ENCODE measurements at regions of chr6 and their contacts with region 1.

Region 1: DNA sequence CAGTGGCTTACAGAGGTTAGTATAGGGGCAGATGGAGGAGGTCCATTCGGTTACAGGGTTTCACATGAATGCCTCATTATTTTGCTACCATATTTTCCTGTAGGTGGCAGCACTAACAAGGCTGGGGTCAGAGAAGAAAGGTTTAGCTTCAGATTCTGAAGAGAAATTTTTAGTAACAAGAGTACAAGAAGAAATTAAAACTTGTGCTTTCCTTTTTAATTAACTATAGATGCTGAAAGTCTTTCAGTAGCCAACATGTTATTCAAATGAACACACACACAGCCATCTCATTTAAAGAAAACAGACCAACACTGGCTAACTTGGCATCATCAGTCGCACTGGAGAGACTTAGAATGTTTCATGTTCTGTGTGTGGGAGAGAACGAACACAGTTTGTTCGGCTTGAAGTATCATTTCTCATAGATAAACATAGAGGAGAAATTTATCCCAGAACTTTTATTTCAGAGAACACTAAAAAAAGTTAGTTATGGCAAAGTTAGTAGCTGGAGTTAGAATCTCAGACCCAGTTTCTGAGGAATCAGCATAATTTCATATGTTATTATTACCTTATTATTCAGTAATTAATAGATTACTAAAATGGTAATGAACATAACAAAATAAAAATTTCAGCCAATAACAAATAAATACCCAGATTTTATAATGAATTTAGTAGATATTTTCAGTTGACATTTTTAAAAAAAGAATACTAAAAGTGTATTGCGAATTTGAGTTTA is 314.0 kb upstream of the RSPO3 start:
- DNase-seq: peak; percentile 77
- H3K4me3 ChIP-seq: no peak overlapping the region
- H3K27ac ChIP-seq: no peak overlapping the region
- H3K4me1 ChIP-seq: peaks cover 9% of the 10 kb centered on the region
- H3K27me3 ChIP-seq: no peaks in the 10 kb centered on the region
- CTCF ChIP-seq: peak; percentile 63 to 66
- POLR2A ChIP-seq: no peak

Region 2: GRCh38 chr6:125995972-125996580 is 808.4 kb before region 1 on chr6:
- CTCF ChIA-PET with region 1: interaction called, 8 read pairs
- POLR2A ChIA-PET with region 1: no interaction called
- dilution Hi-C with region 1: no loop called
- intact Hi-C with region 1: loop called (anchors 5 kb)
- DNase-seq: peak; percentile 74
- H3K4me3 ChIP-seq: no peak overlapping the region
- H3K27ac ChIP-seq: no peak overlapping the region
- H3K4me1 ChIP-seq: no peaks in the 10 kb centered on the region
- H3K27me3 ChIP-seq: no peaks in the 10 kb centered on the region
- CTCF ChIP-seq: peak; percentile 84 to 97
- POLR2A ChIP-seq: no peak

Region 3: DNA sequence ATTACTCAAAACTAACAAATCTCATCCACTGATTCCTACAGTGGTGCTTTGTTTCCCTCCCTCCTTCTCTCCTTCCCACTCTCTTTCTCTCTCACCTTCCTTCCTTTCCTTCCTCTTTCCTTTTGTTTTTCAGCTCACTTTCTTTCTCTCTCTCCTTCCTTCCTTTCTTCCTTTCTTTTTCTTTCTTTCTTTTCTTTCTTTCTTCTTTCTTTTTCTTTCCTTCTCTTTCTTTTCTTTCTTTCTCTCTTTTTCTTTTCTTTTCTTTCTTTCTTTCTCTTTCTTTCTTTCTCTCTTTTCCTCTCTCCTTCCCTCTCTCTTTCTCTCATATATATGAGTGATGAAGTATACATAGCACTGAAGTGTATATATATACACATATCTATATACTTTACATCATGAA is 223.2 kb before region 1 on chr6:
- CTCF ChIA-PET with region 1: no interaction called
- POLR2A ChIA-PET with region 1: no interaction called
- dilution Hi-C with region 1: no loop called
- intact Hi-C with region 1: no loop called
- DNase-seq: no peak
- H3K4me3 ChIP-seq: no peak overlapping the region
- H3K27ac ChIP-seq: no peak overlapping the region
- H3K4me1 ChIP-seq: no peaks in the 10 kb centered on the region
- H3K27me3 ChIP-seq: no peaks in the 10 kb centered on the region
- CTCF ChIP-seq: no peak
- POLR2A ChIP-seq: no peak

Region 4: DNA sequence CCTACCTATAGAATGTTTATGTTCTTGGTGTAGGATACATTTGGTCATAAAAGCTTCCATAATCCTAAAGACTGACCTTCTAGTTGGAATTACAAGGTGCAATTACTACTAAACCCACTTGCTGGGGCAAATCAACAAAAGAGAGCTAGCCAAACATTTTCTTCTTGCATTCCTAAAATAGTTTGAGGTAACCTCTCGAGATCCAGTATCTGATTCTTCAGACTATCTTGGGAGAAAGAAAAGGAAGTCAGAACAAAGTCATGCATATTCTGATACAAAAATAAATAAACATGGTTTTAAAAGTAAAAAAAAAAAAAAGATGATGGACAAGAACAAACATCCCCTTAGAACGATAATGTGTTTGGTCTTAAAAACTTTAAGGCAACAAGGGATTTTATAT is 19.7 kb after region 1 on chr6:
- CTCF ChIA-PET with region 1: interaction called, 17 read pairs
- POLR2A ChIA-PET with region 1: no interaction called
- dilution Hi-C with region 1: no loop called
- intact Hi-C with region 1: no loop called
- DNase-seq: no peak
- H3K4me3 ChIP-seq: no peak overlapping the region
- H3K27ac ChIP-seq: no peak overlapping the region
- H3K4me1 ChIP-seq: peaks cover 19% of the 10 kb centered on the region
- H3K27me3 ChIP-seq: no peaks in the 10 kb centered on the region
- CTCF ChIP-seq: no peak
- POLR2A ChIP-seq: no peak

Region 5: GRCh38 chr6:126919947-126920346 is 115.4 kb after region 1 on chr6:
- CTCF ChIA-PET with region 1: interaction called, 8 read pairs
- POLR2A ChIA-PET with region 1: no interaction called
- dilution Hi-C with region 1: loop called (anchors 25 kb)
- intact Hi-C with region 1: loop called (anchors 1 kb)
- DNase-seq: peak; percentile 79
- H3K4me3 ChIP-seq: no peak overlapping the region
- H3K27ac ChIP-seq: peak overlapping the region; percentile 68
- H3K4me1 ChIP-seq: peaks cover 49% of the 10 kb centered on the region
- H3K27me3 ChIP-seq: no peaks in the 10 kb centered on the region
- CTCF ChIP-seq: no peak
- POLR2A ChIP-seq: no peak

Region 6: DNA sequence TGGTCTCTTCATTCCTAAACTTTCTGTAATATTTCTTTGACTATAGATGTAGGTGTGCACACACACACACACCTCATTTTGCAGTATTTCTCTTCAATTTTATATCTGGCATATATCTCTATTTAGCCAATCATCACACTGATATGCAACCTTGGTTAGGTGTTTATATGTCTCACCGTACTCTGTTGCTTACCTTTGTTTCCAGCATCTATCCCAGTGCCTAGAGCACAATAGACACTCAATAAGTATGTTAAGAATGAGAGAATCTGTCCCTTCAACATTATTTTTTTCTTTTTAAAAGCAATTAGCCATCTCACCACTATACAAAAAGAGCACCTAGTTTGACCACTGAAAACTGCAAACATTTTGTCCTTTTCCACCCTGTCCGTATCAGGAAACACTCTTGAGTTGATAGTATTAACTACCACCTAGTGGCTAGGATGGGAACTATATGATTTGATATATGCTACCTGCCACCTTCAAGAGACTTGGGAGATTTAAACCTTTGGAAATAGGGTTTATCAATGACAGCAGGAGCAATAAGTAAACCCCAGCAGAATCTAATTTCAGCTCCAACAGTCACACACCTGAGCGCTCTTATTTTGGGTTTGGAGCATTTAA is 265.3 kb after region 1 on chr6:
- CTCF ChIA-PET with region 1: interaction called, 12 read pairs
- POLR2A ChIA-PET with region 1: no interaction called
- dilution Hi-C with region 1: no loop called
- intact Hi-C with region 1: loop called (anchors 1 kb)
- DNase-seq: peak; percentile 55
- H3K4me3 ChIP-seq: no peak overlapping the region
- H3K27ac ChIP-seq: no peak overlapping the region
- H3K4me1 ChIP-seq: no peaks in the 10 kb centered on the region
- H3K27me3 ChIP-seq: no peaks in the 10 kb centered on the region
- CTCF ChIP-seq: peak; percentile 34 to 40
- POLR2A ChIP-seq: no peak

Region 7: GRCh38 chr6:127115084-127115655 is 310.7 kb after region 1 on chr6:
- CTCF ChIA-PET with region 1: interaction called, 20 read pairs
- POLR2A ChIA-PET with region 1: no interaction called
- dilution Hi-C with region 1: no loop called
- intact Hi-C with region 1: no loop called
- DNase-seq: no peak
- H3K4me3 ChIP-seq: no peak overlapping the region
- H3K27ac ChIP-seq: no peak overlapping the region
- H3K4me1 ChIP-seq: peaks cover 7% of the 10 kb centered on the region
- H3K27me3 ChIP-seq: no peaks in the 10 kb centered on the region
- CTCF ChIP-seq: no peak
- POLR2A ChIP-seq: no peak